GM12878 (cell line): ENCODE measurements at regions of chr5 and their contacts with region 1.

Region 1: DNA sequence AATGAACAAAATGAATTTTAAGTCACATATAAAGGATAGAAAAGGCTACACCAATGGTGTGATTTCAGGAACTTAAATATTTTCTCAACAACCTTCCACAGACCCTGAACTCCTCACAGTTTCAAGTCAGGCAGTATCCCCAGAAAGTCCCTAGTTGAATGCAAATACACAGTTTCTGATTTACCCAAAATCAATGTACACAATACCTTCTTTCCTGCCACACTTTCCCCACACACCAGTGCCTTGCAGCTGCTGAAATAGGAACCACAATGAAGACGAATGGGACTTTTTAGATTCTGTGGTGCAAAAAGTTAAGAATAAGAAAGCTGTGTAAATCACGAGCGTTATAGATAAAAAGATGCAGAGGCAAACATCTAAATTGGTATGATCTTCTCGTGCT is 552.4 kb upstream of the MEF2C start:
- DNase-seq: peak; percentile 90
- ATAC-seq: peak; percentile 88
- H3K4me3 ChIP-seq: 0 out of 2 replicates have a peak overlapping the region, but pooled peaks have one; percentile 41
- H3K27ac ChIP-seq: peak overlapping the region; percentile 92
- H3K4me1 ChIP-seq: peaks cover 29% of the 10 kb centered on the region; the same call in 1 of the 2 replicates
- H3K27me3 ChIP-seq: no peaks in the 10 kb centered on the region
- CTCF ChIP-seq: 0 out of 6 replicates have a peak, but pooled peaks of 1 of the 3 experiments have one; percentile 3
- EP300 ChIP-seq: peak; percentile 50 to 87; a peak in 2 of 4 replicates
- POLR2A ChIP-seq: 0 out of 2 replicates have a peak, but pooled peaks have one; percentile 28
- RAD21 ChIP-seq: peak; percentile 53

Region 2: DNA sequence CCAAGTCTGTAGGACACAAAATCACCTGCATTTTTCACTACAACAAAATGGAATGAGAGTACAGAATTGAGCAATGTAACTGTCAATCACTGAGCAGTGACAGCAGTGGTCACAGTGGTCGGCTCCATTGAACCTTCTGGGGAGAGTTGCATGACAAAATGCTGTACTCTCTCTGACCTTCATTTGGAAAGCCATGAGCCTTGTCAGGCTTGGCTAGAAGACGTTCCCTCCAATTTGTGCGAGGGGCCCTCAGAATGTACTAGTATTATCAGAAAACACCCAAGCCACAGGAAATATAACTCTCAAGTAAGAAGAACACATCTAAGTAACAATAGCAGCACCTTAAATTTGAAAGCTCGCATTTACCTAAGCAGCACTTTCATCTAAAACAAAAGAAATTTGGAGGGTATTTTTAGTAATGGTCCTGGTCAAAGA is 126.7 kb before region 1 on chr5:
- CTCF ChIA-PET with region 1: interaction called, 10 read pairs
- POLR2A ChIA-PET with region 1: interaction called, 3 read pairs
- RAD21 ChIA-PET with region 1: interaction called, 29 read pairs
- SMC1A ChIA-PET with region 1: interaction called, 16 read pairs
- in situ Hi-C with region 1: no loop called
- intact Hi-C with region 1: loop called (anchors 2 kb)
- DNase-seq: peak; percentile 92
- ATAC-seq: peak; percentile 89
- H3K4me3 ChIP-seq: no peak overlapping the region
- H3K27ac ChIP-seq: peak overlapping the region; percentile 96
- H3K4me1 ChIP-seq: peaks cover 44% of the 10 kb centered on the region
- H3K27me3 ChIP-seq: no peaks in the 10 kb centered on the region
- CTCF ChIP-seq: no peak
- EP300 ChIP-seq: peak; percentile 85 to 95
- POLR2A ChIP-seq: peak; percentile 43; the same call in 1 of the 2 replicates
- RAD21 ChIP-seq: peak; percentile 33; the same call in 1 of the 2 replicates

Region 3: GRCh38 chr5:89351232-89351631 is 84.1 kb before region 1 on chr5:
- CTCF ChIA-PET with region 1: interaction called, 6 read pairs
- POLR2A ChIA-PET with region 1: interaction called, 4 read pairs
- RAD21 ChIA-PET with region 1: interaction called, 56 read pairs
- SMC1A ChIA-PET with region 1: interaction called, 29 read pairs
- in situ Hi-C with region 1: no loop called
- intact Hi-C with region 1: no loop called
- DNase-seq: no peak
- ATAC-seq: peak; percentile 16
- H3K4me3 ChIP-seq: no peak overlapping the region
- H3K27ac ChIP-seq: peak overlapping the region; percentile 68; the same call in 1 of the 2 replicates
- H3K4me1 ChIP-seq: peaks cover 18% of the 10 kb centered on the region; the same call in 1 of the 2 replicates
- H3K27me3 ChIP-seq: no peaks in the 10 kb centered on the region
- CTCF ChIP-seq: no peak
- EP300 ChIP-seq: 0 out of 4 replicates have a peak, but pooled peaks of 1 of the 2 experiments have one; percentile 54
- POLR2A ChIP-seq: no peak
- RAD21 ChIP-seq: no peak

Region 4: DNA sequence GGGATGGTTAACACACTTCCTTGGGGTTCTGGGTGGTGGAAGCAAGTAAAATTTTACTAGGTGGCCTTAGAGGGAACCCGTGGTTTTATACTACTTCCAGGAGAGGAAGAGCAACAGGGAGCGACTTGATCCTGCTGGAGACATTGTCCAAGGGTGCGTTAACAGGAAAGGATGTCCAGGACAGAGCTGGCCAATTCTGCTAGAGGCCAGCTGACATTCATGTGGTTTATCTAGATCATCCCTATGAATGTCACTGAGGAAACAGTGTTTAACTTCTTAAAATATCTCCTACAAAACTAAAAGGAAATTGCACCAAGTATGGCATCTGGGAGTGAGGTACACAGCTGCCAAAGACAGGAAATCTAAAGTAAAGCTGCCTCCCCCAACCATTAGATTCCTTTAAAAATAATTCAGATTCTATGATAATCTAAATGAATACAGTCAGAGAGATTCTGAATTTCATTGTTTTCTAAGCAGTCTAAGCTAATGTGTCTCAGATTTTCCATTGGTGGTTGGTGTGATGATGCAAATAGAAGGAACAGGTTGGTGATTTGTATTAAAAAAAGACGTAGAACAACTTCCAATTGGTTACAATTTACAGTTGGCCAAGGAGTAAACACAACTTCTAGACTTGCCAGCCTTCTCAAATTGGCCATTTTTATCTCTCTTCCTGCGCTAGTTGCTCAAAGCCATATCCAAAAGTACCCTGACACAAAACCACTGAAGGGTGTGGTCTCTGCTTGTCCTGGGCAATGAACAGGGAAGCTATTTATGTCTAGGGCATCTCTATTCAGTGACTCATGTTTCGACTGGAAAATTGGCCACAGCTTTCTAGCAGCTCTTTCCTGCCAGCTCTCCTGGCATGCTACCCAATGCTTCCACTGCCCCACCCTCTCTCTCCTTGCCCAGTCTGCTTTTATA is 22.3 kb after region 1 on chr5:
- CTCF ChIA-PET with region 1: no interaction called
- POLR2A ChIA-PET with region 1: no interaction called
- RAD21 ChIA-PET with region 1: interaction called, 4 read pairs
- SMC1A ChIA-PET with region 1: interaction called, 13 read pairs
- in situ Hi-C with region 1: no loop called
- intact Hi-C with region 1: no loop called
- DNase-seq: no peak
- ATAC-seq: no peak
- H3K4me3 ChIP-seq: no peak overlapping the region
- H3K27ac ChIP-seq: no peak overlapping the region
- H3K4me1 ChIP-seq: no peaks in the 10 kb centered on the region
- H3K27me3 ChIP-seq: no peaks in the 10 kb centered on the region
- CTCF ChIP-seq: no peak
- EP300 ChIP-seq: no peak
- POLR2A ChIP-seq: no peak
- RAD21 ChIP-seq: no peak

Region 5: DNA sequence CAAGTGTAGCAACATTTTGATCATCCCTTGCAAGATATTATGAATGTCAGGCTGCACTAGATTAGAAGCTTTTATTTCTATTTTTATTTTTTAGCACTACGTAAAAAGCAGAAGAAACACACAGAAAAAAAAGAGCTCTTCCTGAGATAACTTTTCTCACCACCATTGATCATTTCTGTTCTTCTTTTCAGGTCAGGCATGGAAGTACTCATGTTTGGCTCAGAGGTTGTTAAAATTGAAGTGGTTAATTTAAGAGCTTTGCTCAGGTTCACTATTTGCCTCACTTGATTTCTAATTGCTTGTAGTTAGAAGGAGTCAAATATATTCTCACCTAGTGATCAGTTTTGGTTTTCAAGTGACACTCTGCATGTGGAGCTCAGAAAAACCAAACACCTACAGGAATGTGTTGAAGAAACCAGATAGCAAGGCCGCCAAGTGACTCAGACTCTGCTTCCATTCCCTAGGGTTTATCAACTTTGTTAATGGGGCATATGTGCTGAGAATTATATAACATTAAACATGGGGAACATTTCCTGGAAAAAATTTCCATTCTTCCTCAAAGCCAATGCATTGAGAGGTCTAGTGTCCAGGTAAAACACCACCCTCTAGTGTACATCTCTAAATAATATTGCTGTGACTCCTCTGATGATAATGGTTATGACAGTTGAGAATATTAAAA is 294.4 kb after region 1 on chr5:
- CTCF ChIA-PET with region 1: interaction called, 9 read pairs
- POLR2A ChIA-PET with region 1: no interaction called
- RAD21 ChIA-PET with region 1: interaction called, 5 read pairs
- SMC1A ChIA-PET with region 1: interaction called, 10 read pairs
- in situ Hi-C with region 1: no loop called
- intact Hi-C with region 1: no loop called
- DNase-seq: peak; percentile 34
- ATAC-seq: peak; percentile 76
- H3K4me3 ChIP-seq: no peak overlapping the region
- H3K27ac ChIP-seq: no peak overlapping the region
- H3K4me1 ChIP-seq: peaks cover 7% of the 10 kb centered on the region; the same call in 1 of the 2 replicates
- H3K27me3 ChIP-seq: no peaks in the 10 kb centered on the region
- CTCF ChIP-seq: peak; percentile 26 to 54 (median 27); a peak in 4 of 6 replicates
- EP300 ChIP-seq: no peak
- POLR2A ChIP-seq: no peak
- RAD21 ChIP-seq: peak; percentile 65